IMR-90 (cell line): ENCODE measurements at regions of chr4 and their contacts with region 1.

Region 1: DNA sequence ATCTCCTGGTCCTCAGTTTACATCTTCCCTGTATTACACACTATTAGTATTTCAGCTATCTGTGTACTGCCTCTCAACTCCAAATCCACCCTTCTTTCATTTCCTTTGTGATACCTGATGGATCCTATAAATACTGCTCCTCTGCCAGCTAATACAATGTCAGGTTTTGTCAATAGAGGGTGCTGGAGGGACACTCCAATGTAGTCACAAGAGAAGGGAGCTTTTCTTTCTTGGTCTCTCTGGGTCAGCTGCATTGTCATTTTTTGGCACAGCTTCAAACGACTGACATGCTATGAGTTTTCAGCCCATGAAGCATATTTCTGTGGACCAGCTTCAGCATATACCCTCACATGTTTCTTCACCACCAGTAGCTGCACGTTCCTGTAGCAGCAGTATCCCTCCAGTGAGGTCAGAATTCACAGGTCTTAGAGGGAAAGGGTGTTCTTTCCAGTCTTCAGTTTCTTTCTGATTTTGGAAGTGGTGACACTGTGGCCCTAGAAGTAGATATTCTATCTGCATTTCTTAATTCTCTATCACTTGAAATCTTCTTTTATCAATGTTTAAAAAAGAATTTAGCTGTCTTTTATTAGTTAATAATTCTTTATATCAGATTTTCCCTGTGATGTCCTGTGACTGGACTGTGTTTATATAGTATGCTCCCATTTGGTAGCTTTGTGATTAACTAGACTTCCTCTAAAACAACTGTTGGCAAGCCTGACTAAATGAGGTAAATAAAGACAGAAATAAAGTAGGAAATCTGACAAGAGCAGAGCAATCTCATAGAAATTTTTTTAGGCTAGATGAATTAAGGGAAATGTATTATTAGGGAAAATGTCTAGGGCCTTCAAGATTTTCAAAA is 60.6 kb downstream of the GABRA2 start:
- DNase-seq: peak; percentile 61
- ATAC-seq: peak; percentile 79
- H3K4me3 ChIP-seq: no peak overlapping the region
- H3K27ac ChIP-seq: no peak overlapping the region
- H3K4me1 ChIP-seq: no peaks in the 10 kb centered on the region
- H3K27me3 ChIP-seq: no peaks in the 10 kb centered on the region
- CTCF ChIP-seq: peak; percentile 60
- POLR2A ChIP-seq: no peak
- RAD21 ChIP-seq: peak; percentile 64

Region 2: DNA sequence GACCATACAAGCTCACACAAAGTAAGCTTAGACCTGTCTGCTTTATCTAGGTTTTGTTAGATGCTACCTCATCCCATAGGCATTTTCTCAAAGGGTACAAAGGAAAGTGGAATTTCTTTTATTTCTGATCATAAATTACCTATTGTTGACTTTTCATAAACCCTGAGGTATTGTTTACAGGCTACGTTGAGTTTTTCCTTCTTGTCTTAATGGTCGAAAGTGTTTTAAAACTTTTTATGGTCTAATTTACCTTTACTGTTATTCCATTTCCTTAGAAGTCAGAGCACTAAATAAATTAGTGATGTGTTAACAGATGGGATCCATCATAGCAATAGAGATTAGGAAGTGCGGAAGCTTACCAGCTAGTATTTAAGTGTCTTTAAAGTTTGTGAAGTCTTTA is 219.8 kb after region 1 on chr4:
- CTCF ChIA-PET with region 1: no interaction called
- POLR2A ChIA-PET with region 1: no interaction called
- dilution Hi-C with region 1: no loop called
- in situ Hi-C with region 1: no loop called
- intact Hi-C with region 1: loop called (anchors 10 kb)
- DNase-seq: no peak
- ATAC-seq: no peak
- H3K4me3 ChIP-seq: no peak overlapping the region
- H3K27ac ChIP-seq: no peak overlapping the region
- H3K4me1 ChIP-seq: no peaks in the 10 kb centered on the region
- H3K27me3 ChIP-seq: no peaks in the 10 kb centered on the region
- CTCF ChIP-seq: no peak
- POLR2A ChIP-seq: no peak
- RAD21 ChIP-seq: no peak

Region 3: DNA sequence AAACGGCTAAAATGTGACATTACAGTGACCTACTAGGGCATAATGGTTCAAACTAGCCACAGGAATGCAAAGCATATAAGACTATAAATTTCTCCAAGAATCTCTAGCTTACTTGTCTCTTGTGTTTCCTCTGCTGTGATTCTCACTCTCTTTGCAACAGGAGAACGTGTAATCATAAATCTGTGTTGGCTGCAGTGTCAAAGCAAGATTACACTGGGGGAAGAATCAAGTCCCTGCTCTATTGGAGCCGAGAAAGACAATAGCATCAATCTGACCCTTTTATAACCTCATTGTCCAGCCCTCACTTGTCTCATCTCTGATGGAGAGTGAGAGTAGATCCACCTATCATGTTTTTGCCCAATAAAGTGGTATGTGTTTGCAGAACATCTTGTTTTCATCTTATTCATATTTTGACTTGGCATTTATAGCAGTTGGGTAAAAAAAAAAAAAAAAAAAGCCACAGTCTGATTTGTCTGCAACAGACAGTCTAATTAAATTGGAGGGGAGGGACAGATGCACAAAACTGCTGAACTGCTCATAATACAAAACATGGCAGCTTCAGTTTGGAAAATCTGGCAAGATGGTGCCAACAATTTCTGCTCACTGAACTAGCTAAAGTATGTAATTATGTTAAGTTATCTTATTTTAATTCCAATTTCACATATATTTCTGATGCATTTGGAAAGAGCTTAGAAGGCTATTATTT is 225.6 kb after region 1 on chr4:
- CTCF ChIA-PET with region 1: no interaction called
- POLR2A ChIA-PET with region 1: no interaction called
- dilution Hi-C with region 1: no loop called
- in situ Hi-C with region 1: no loop called
- intact Hi-C with region 1: loop called (anchors 10 kb)
- DNase-seq: no peak
- ATAC-seq: no peak
- H3K4me3 ChIP-seq: no peak overlapping the region
- H3K27ac ChIP-seq: no peak overlapping the region
- H3K4me1 ChIP-seq: no peaks in the 10 kb centered on the region
- H3K27me3 ChIP-seq: no peaks in the 10 kb centered on the region
- CTCF ChIP-seq: no peak
- POLR2A ChIP-seq: no peak
- RAD21 ChIP-seq: no peak

Region 4: GRCh38 chr4:46648088-46648744 is 318.9 kb after region 1 on chr4:
- CTCF ChIA-PET with region 1: interaction called, 14 read pairs
- POLR2A ChIA-PET with region 1: no interaction called
- dilution Hi-C with region 1: no loop called
- in situ Hi-C with region 1: loop called (anchors 5 kb)
- intact Hi-C with region 1: loop called (anchors 1 kb)
- DNase-seq: peak; percentile 64
- ATAC-seq: peak; percentile 97
- H3K4me3 ChIP-seq: no peak overlapping the region
- H3K27ac ChIP-seq: no peak overlapping the region
- H3K4me1 ChIP-seq: no peaks in the 10 kb centered on the region
- H3K27me3 ChIP-seq: no peaks in the 10 kb centered on the region
- CTCF ChIP-seq: peak; percentile 55
- POLR2A ChIP-seq: no peak
- RAD21 ChIP-seq: peak; percentile 77

Region 5: GRCh38 chr4:46715468-46715867 is 386.1 kb after region 1 on chr4:
- CTCF ChIA-PET with region 1: no interaction called
- POLR2A ChIA-PET with region 1: no interaction called
- dilution Hi-C with region 1: no loop called
- in situ Hi-C with region 1: no loop called
- intact Hi-C with region 1: loop called (anchors 1 kb)
- DNase-seq: no peak
- ATAC-seq: no peak
- H3K4me3 ChIP-seq: no peak overlapping the region
- H3K27ac ChIP-seq: no peak overlapping the region
- H3K4me1 ChIP-seq: no peaks in the 10 kb centered on the region
- H3K27me3 ChIP-seq: no peaks in the 10 kb centered on the region
- CTCF ChIP-seq: no peak
- POLR2A ChIP-seq: no peak
- RAD21 ChIP-seq: no peak

Region 6: GRCh38 chr4:46886711-46887110 is 557.4 kb after region 1 on chr4:
- CTCF ChIA-PET with region 1: no interaction called
- POLR2A ChIA-PET with region 1: no interaction called
- dilution Hi-C with region 1: no loop called
- in situ Hi-C with region 1: no loop called
- intact Hi-C with region 1: loop called (anchors 10 kb)
- DNase-seq: peak; percentile 39
- ATAC-seq: peak; percentile 48; the same call in 1 of the 2 replicates
- H3K4me3 ChIP-seq: no peak overlapping the region
- H3K27ac ChIP-seq: no peak overlapping the region
- H3K4me1 ChIP-seq: no peaks in the 10 kb centered on the region
- H3K27me3 ChIP-seq: no peaks in the 10 kb centered on the region; the same call in 1 of the 2 replicates
- CTCF ChIP-seq: peak; percentile 55
- POLR2A ChIP-seq: no peak
- RAD21 ChIP-seq: peak; percentile 37

Region 7: DNA sequence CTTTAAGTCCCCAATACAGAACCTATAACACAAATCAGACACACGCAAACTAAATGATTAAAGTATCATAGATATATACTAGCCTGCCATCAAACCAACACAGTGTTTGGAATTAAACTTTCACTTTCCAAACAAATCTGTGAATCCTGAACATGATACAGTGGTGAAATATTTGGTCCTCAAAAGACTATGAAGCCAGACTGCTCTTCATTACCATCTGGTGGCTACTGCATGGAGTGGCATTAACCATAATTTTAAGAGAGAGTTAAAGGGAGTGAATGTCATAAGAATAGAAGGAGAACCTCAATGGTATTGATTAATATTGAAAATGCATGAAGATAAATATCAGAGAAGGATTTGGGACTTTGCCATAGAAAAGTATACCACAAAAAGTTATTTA is 673.2 kb after region 1 on chr4:
- CTCF ChIA-PET with region 1: no interaction called
- POLR2A ChIA-PET with region 1: no interaction called
- dilution Hi-C with region 1: no loop called
- in situ Hi-C with region 1: no loop called
- intact Hi-C with region 1: loop called (anchors 2 kb)
- DNase-seq: peak; percentile 79
- ATAC-seq: peak; percentile 97
- H3K4me3 ChIP-seq: no peak overlapping the region
- H3K27ac ChIP-seq: no peak overlapping the region
- H3K4me1 ChIP-seq: no peaks in the 10 kb centered on the region
- H3K27me3 ChIP-seq: no peaks in the 10 kb centered on the region
- CTCF ChIP-seq: peak; percentile 68
- POLR2A ChIP-seq: no peak
- RAD21 ChIP-seq: peak; percentile 64